BJ (cell line): ENCODE measurements at regions of chr6 and their contacts with region 1.

Region 1: DNA sequence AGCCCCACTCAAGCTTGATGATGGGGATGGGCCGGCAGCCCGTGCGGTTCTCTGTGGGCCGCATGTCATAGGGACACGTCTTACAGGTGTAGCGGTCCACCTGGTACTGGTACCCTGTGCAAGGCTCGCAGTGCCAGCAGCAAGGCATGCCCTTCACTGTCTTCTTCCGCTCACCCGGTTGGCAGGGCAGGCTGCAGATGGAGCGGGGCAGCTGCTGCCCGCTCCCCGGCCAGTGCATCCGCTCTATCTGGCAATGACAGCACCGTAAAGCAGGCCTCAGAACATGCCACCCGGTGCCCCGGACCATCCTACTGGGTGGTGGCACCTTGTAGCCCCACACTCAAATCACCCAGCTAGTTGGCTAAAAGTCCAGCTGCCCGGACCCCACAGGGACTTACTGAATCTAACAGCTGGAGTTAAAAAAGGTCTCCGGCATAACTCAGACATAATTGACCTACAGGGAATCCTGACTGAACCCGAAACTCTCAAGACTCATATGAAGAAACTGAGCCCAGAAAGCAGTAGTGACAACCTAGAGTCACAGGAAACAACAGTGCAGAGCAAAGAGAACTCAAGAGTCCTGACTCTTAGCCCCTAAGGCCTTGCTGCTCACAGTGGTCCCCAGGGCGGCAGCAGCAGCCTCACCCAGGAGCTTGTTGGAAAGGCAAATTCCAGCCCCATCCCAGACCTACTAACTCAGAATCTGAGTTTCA is 109.4 kb downstream of the GRM4 start:
- DNase-seq: no peak
- H3K4me3 ChIP-seq: no peak overlapping the region
- H3K27me3 ChIP-seq: peaks cover 3% of the 10 kb centered on the region
- CTCF ChIP-seq: no peak

Region 2: DNA sequence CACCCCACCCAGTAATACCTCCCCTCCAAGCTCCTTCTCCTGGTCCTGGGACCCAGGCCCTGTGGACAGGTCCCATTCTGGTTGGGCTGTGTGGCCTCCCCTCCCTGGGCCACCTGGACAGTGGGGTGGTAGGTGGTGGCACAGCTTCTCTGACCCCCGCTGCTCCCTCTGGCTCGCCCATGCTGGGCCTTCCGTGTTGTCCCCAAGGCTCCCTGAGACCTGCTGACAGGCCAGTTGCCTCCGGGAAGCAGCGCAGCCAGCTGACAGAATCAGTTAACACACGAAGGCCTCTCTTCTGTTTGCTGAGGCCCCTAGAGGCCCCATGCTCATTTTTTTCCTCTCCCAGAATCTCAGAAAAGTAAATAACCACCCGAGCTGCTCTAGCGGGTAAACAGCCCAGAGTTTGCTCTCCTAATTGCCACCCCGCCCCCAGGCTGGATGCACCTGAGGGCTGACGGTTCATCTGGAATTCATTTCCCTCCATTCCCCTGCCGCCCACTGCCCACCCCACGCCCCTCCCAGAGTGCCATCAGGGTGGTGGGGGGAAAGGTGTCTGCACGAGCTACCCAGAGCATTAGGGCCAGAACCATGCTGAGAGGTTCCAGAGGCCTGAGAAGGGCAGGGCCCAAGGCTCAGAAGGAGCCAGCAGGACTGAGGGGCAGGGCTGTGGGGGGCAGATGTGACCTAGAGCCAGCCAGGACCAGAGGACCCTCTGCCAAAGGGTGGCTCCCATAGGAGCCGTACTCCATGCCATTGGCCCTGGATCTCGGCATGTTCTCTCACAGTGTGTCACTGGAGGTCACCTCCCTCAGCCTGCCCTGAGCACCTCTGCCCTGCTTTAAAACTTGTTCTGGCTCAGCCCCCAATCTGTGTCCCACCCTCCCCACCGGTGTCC is 48.1 kb before region 1 on chr6:
- CTCF ChIA-PET with region 1: no interaction called
- POLR2A ChIA-PET with region 1: no interaction called
- DNase-seq: no peak
- H3K4me3 ChIP-seq: no peak overlapping the region
- H3K27me3 ChIP-seq: peaks cover 3% of the 10 kb centered on the region; the same call in 1 of the 2 replicates
- CTCF ChIP-seq: no peak

Region 3: GRCh38 chr6:34047913-34048867 is 11.7 kb after region 1 on chr6:
- CTCF ChIA-PET with region 1: interaction called, 22 read pairs
- POLR2A ChIA-PET with region 1: no interaction called
- DNase-seq: no peak
- H3K4me3 ChIP-seq: no peak overlapping the region
- H3K27me3 ChIP-seq: peaks cover 15% of the 10 kb centered on the region
- CTCF ChIP-seq: no peak

Region 4: DNA sequence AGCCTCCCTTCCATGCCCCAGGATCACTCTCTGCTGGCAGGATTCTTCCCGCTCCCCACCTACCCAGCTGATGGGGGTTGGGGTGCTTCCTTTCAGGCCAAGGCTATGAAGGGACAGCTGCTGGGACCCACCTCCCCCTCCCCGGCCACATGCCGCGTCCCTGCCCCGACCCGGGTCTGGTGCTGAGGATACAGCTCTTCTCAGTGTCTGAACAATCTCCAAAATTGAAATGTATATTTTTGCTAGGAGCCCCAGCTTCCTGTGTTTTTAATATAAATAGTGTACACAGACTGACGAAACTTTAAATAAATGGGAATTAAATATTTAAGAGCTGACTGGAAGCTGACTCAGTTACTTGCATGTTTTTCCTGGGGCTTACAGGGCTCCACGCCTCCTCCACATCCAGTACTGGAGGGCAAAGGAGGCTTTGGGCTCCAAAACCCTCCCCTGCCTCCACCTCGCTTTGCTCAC is 1391.4 kb after region 1 on chr6:
- CTCF ChIA-PET with region 1: no interaction called
- POLR2A ChIA-PET with region 1: no interaction called
- DNase-seq: no peak
- H3K4me3 ChIP-seq: no peak overlapping the region
- H3K27me3 ChIP-seq: no peaks in the 10 kb centered on the region
- CTCF ChIP-seq: no peak